ENCODE measurements at regions of chr5 and their contacts with region 1.

Region 1: GRCh38 chr5:99156688-99157087 is 227.9 kb upstream of the CHD1 start:
- DNase-seq: no peak
- H3K4me3 Mint-ChIP-seq: no peak overlapping the region
- H3K27ac Mint-ChIP-seq: no peak overlapping the region
- H3K4me1 Mint-ChIP-seq: no peaks in the 10 kb centered on the region
- H3K27me3 Mint-ChIP-seq: no peaks in the 10 kb centered on the region

Region 2: GRCh38 chr5:99122976-99123375 is 33.7 kb before region 1 on chr5:
- intact Hi-C with region 1: no loop called
- DNase-seq: no peak
- H3K4me3 Mint-ChIP-seq: no peak overlapping the region
- H3K27ac Mint-ChIP-seq: no peak overlapping the region
- H3K4me1 Mint-ChIP-seq: no peaks in the 10 kb centered on the region
- H3K27me3 Mint-ChIP-seq: no peaks in the 10 kb centered on the region

Region 3: GRCh38 chr5:101143526-101143925 is 1986.8 kb after region 1 on chr5:
- intact Hi-C with region 1: loop called (anchors 10 kb)
- DNase-seq: no peak
- H3K4me3 Mint-ChIP-seq: no peak overlapping the region
- H3K27ac Mint-ChIP-seq: no peak overlapping the region
- H3K4me1 Mint-ChIP-seq: no peaks in the 10 kb centered on the region
- H3K27me3 Mint-ChIP-seq: no peaks in the 10 kb centered on the region